G401 (cell line): ENCODE measurements at regions of chr12 and their contacts with region 1.

Region 1: DNA sequence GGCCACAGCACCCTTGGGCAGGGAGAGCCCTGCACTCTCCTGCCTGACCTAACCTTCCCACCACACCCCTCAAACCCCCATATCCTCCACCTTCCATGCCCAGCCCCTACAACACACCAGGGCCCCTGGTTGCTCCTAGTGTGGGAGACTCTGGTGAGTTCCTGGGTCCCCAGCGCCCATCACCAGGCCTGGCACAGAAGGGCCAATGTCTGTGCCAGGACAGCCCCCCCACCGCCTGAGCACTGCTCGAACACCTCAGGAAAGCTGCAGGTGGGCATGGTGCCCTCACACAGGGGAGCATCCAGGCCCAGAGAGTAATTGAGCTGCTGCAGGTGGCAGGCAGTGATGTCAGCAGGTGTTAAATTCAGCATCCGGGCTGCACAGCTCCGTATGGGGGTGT is 15.2 kb downstream of the ADCY6 start:
- DNase-seq: no peak

Region 2: DNA sequence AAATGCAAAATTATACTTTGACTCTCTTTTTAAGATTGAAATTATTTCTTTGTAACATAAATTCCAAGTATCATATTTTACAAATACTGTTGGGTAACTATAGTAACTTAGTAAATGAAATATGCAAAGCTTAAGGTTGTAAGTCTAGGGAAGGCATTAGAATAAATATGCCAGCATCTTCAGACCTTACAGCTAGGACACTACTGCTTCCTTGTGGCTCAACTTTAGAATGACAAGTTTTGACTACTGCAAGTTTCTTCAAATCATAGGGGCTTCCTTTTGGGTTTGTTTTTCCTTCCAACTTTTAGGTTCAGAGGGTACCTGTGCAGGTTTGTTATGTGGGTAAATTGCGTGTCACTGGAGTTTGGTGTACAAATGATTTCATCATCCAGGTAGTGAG is 319.0 kb before region 1 on chr12:
- in situ Hi-C with region 1: no loop called
- DNase-seq: peak; percentile 23

Region 3: GRCh38 chr12:48678551-48679185 is 95.0 kb before region 1 on chr12:
- in situ Hi-C with region 1: loop called (anchors 5 kb)
- DNase-seq: no peak

Region 4: DNA sequence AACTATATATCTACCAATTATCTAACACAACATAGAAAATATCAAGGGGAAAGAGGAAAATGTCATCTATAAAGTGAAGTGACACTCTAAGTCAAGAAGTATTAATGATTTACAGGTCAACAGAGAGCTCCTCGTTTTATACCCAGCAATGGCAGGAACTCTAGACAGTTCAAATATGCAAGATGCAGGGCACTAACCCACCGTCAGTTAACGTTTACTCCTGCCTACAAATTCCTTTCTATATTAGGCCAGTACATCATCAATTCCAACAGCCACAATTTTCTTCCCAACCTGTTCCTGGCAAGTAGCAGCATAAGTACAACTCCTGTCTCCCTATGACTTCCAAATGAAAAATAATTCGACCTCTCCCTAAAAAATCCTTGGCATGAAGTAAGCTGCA is 82.7 kb before region 1 on chr12:
- in situ Hi-C with region 1: no loop called
- DNase-seq: no peak

Region 5: DNA sequence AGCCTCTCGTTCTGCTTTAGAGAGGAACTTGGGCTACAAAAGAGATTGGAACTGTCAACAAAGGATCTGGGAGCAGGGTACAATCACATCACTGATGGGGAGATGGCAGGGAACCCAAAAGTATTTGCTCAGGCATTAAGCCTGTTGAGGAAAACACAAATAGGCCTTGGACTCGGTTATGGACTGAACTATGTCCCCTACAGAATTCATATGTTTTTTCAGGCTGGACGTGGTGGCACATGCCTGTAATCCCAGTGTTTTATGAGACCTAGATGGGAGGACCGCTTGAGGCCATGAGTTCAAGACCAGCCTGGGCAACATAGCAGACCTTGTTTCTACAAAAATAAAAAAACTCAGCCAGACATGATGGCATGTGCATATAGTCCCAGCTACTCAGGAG is 64.4 kb after region 1 on chr12:
- in situ Hi-C with region 1: no loop called
- DNase-seq: no peak